Activated naive CD4-positive, alpha-beta T cell treated with anti-CD3 and anti-CD28 coated beads for 36 hours (primary cell): ENCODE measurements at regions of chr2 and their contacts with region 1.

Region 1: GRCh38 chr2:226835796-226836547 is at the start of gene RHBDD1:
- DNase-seq: peak; percentile 93
- H3K4me3 Mint-ChIP-seq: peak within 1 kb of the TSS; percentile 92
- H3K27ac Mint-ChIP-seq: peak within 1 kb of the TSS; percentile 98
- H3K4me1 Mint-ChIP-seq: peaks cover 55% of the 10 kb centered on the region
- H3K27me3 Mint-ChIP-seq: no peaks in the 10 kb centered on the region
- total RNA-seq, gene RHBDD1: 42.6 to 43.3 TPM

Region 2: GRCh38 chr2:226791487-226792081 is 44.4 kb before region 1 on chr2:
- CTCF ChIA-PET with region 1: interaction called, 3 read pairs
- intact Hi-C with region 1: loop called (anchors 1 kb)
- DNase-seq: peak; percentile 90
- H3K4me3 Mint-ChIP-seq: peak overlapping the region; percentile 83
- H3K27ac Mint-ChIP-seq: peak overlapping the region; percentile 95
- H3K4me1 Mint-ChIP-seq: peaks cover 37% of the 10 kb centered on the region
- H3K27me3 Mint-ChIP-seq: no peaks in the 10 kb centered on the region

Region 3: GRCh38 chr2:226904592-226904991 is 68.6 kb after region 1 on chr2:
- CTCF ChIA-PET with region 1: no interaction called
- intact Hi-C with region 1: loop called (anchors 1 kb)
- DNase-seq: peak; percentile 54
- H3K4me3 Mint-ChIP-seq: no peak overlapping the region
- H3K27ac Mint-ChIP-seq: no peak overlapping the region
- H3K4me1 Mint-ChIP-seq: peaks cover 47% of the 10 kb centered on the region
- H3K27me3 Mint-ChIP-seq: no peaks in the 10 kb centered on the region

Region 4: GRCh38 chr2:226995625-226996041 is 159.7 kb after region 1 on chr2:
- CTCF ChIA-PET with region 1: no interaction called
- intact Hi-C with region 1: loop called (anchors 1 kb)
- DNase-seq: peak; percentile 81
- H3K4me3 Mint-ChIP-seq: no peak overlapping the region
- H3K27ac Mint-ChIP-seq: peak overlapping the region; percentile 9
- H3K4me1 Mint-ChIP-seq: peaks cover 12% of the 10 kb centered on the region
- H3K27me3 Mint-ChIP-seq: no peaks in the 10 kb centered on the region

Region 5: DNA sequence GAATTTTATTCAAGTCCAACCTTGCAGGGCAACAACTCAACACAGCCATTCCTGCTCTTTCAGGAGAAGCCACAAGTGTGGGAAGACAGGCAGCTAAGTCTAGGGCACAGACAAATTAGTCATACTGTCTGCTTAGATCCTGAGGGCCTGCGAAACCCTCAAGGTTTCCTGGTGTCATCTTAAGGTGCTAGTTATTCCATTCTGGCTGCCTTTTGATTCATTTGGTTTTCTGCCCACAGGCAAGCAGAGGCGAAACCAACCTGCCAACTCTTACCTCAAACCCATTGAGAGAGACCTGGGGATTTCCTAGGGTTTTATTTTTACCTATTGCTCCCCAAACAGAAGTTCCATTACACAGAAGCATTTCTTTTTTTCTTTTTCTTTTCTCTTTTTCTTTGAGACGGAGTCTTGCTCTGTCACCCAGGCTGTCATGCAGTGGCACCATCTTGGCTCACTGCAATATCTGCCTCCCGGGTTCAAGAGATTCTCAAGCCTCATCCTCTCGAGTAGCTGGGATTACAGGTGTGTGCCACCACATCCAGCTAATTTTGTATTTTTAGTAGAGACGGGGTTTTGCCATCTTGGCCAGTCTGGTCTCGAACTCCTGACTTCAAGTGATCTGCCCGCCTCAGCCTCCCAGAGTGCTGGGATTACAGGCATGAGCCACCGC is 575.5 kb after region 1 on chr2:
- CTCF ChIA-PET with region 1: no interaction called
- intact Hi-C with region 1: loop called (anchors 5 kb)
- DNase-seq: peak; percentile 83
- H3K4me3 Mint-ChIP-seq: peak overlapping the region; percentile 51
- H3K27ac Mint-ChIP-seq: peak overlapping the region; percentile 96
- H3K4me1 Mint-ChIP-seq: peaks cover 76% of the 10 kb centered on the region
- H3K27me3 Mint-ChIP-seq: no peaks in the 10 kb centered on the region